ENCODE measurements at regions of chr16 and their contacts with region 1.

Region 1: GRCh38 chr16:84504420-84505248 is at the start of gene MEAK7:
- DNase-seq: peak; percentile 93 to 99 (median 96)
- ATAC-seq: peak; percentile 99
- H3K4me3 ChIP-seq: peak within 1 kb of the TSS; percentile 97
- H3K4me3 Mint-ChIP-seq: peak within 1 kb of the TSS; percentile 79 to 94 (median 89)
- H3K27ac ChIP-seq: peak within 1 kb of the TSS; percentile 80
- H3K27ac Mint-ChIP-seq: peak within 1 kb of the TSS; percentile 52 to 88 (median 81)
- H3K4me1 ChIP-seq: peaks cover 23 to 49% of the 10 kb centered on the region in 2 donors
- H3K4me1 Mint-ChIP-seq: peaks cover 31 to 59% (median 55%) of the 10 kb centered on the region in 7 donors
- H3K27me3 ChIP-seq: no peaks in the 10 kb centered on the region
- H3K27me3 Mint-ChIP-seq: no peaks in the 10 kb centered on the region
- total RNA-seq, gene MEAK7: 6.3 to 56.1 (median 9.3) TPM

Region 2: DNA sequence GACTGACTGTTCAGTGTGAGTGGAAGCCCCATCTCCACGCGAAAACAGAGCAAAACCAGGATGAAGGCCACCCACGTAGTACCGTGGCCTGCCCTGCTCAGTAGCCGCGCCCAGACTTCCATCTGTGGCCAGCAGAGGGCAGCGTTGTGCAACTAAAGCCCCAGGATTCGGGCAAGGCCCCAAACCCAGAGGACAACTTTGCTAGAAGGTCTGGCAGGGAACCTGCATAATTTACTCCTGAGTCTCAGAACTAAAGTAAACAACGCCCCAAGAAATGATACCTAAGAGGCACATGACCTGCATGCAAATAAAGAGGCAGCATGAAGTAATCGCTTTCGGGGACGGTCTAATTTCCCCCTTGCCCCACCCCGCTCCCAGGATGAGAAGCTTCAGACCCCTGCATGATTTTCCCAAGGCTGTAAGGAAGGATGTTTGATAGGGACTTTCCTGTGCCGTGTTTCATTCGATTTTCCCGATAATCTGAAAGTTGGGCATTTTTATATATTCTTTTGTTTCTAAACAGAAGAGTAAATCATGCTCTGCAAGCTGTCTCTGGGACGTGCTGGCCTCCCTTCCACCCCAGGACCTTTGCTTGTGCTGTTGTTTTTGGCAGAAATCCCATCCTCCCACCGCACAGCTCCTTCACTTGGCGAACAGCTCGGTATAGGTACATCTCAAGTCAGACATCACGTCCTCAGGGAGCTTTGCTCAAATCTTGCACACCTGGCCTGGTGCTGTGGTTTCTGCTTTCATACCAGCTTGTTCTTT is 678.3 kb before region 1 on chr16:
- CTCF ChIA-PET with region 1: no interaction called
- POLR2A ChIA-PET with region 1: no interaction called
- intact Hi-C with region 1: loop called in 1 of 2 experiments (anchors 1 kb)
- DNase-seq: peak; percentile 42 to 82 (median 69)
- ATAC-seq: peak; percentile 96
- H3K4me3 ChIP-seq: no peak overlapping the region
- H3K4me3 Mint-ChIP-seq: peak overlapping the region in 1 of 10 donors; percentile 46
- H3K27ac ChIP-seq: no peak overlapping the region
- H3K27ac Mint-ChIP-seq: peak overlapping the region in 3 of 9 donors; percentile 10 to 72 (median 69)
- H3K4me1 ChIP-seq: no peaks in the 10 kb centered on the region
- H3K4me1 Mint-ChIP-seq: peaks cover 0 to 6% (median 5%) of the 10 kb centered on the region in 7 donors
- H3K27me3 ChIP-seq: no peaks in the 10 kb centered on the region
- H3K27me3 Mint-ChIP-seq: peaks cover 0 to 5% (median 0%) of the 10 kb centered on the region in 5 donors

Region 3: GRCh38 chr16:84116720-84117493 is 387.7 kb before region 1 on chr16 and contains the start of gene MBTPS1:
- CTCF ChIA-PET with region 1: no interaction called
- POLR2A ChIA-PET with region 1: no interaction called
- intact Hi-C with region 1: loop called in 1 of 2 experiments (anchors 10 kb)
- DNase-seq: peak; percentile 94 to 99 (median 97)
- ATAC-seq: peak; percentile 92
- H3K4me3 ChIP-seq: peak within 1 kb of the TSS; percentile 99
- H3K4me3 Mint-ChIP-seq: peak within 1 kb of the TSS; percentile 90 to 96 (median 94)
- H3K27ac ChIP-seq: peak within 1 kb of the TSS; percentile 86
- H3K27ac Mint-ChIP-seq: peak within 1 kb of the TSS; percentile 93 to 98 (median 96)
- H3K4me1 ChIP-seq: peaks cover 14 to 18% of the 10 kb centered on the region in 2 donors
- H3K4me1 Mint-ChIP-seq: peaks cover 6 to 36% (median 23%) of the 10 kb centered on the region in 7 donors
- H3K27me3 ChIP-seq: no peaks in the 10 kb centered on the region
- H3K27me3 Mint-ChIP-seq: no peaks in the 10 kb centered on the region
- total RNA-seq, gene MBTPS1: 65.3 to 157 (median 138) TPM

Region 4: DNA sequence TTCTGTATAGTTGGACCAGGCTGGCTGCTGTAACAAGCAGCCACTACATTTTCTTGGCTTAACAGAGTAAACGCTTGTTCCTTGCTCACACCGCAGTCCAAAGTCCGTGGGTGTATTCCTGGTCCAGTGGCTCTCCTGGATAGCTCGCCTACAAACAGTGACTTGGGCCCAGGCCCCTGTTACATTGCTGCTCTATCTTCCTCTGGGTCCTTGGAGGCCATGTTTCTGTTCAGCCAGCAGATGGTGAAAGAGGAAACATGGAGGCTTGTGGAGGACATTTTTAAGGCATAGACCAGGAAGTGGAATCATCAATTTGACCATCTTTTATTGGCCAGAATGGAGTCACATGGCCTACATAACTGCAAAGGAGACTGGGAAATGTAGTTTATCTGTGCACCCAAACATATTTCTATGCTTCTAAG is 81.2 kb before region 1 on chr16:
- CTCF ChIA-PET with region 1: no interaction called
- POLR2A ChIA-PET with region 1: no interaction called
- intact Hi-C with region 1: no loop called
- DNase-seq: no peak
- ATAC-seq: no peak
- H3K4me3 ChIP-seq: no peak overlapping the region
- H3K4me3 Mint-ChIP-seq: no peak overlapping the region
- H3K27ac ChIP-seq: no peak overlapping the region
- H3K27ac Mint-ChIP-seq: no peak overlapping the region
- H3K4me1 ChIP-seq: no peaks in the 10 kb centered on the region
- H3K4me1 Mint-ChIP-seq: peaks cover 0 to 3% (median 0%) of the 10 kb centered on the region in 7 donors
- H3K27me3 ChIP-seq: no peaks in the 10 kb centered on the region
- H3K27me3 Mint-ChIP-seq: peaks cover 0 to 21% (median 5%) of the 10 kb centered on the region in 5 donors

Region 5: GRCh38 chr16:84475618-84476340 is 28.9 kb before region 1 on chr16:
- CTCF ChIA-PET with region 1: no interaction called
- POLR2A ChIA-PET with region 1: no interaction called
- intact Hi-C with region 1: no loop called
- DNase-seq: peak in 3 of 9 donors; percentile 8 to 29 (median 20)
- ATAC-seq: no peak
- H3K4me3 ChIP-seq: no peak overlapping the region
- H3K4me3 Mint-ChIP-seq: peak overlapping the region in 1 of 10 donors; percentile 4
- H3K27ac ChIP-seq: no peak overlapping the region
- H3K27ac Mint-ChIP-seq: peak overlapping the region in 6 of 9 donors; percentile 0 to 79 (median 28)
- H3K4me1 ChIP-seq: no peaks in the 10 kb centered on the region
- H3K4me1 Mint-ChIP-seq: peaks cover 5 to 25% (median 5%) of the 10 kb centered on the region in 7 donors
- H3K27me3 ChIP-seq: no peaks in the 10 kb centered on the region
- H3K27me3 Mint-ChIP-seq: no peaks in the 10 kb centered on the region

Region 6: DNA sequence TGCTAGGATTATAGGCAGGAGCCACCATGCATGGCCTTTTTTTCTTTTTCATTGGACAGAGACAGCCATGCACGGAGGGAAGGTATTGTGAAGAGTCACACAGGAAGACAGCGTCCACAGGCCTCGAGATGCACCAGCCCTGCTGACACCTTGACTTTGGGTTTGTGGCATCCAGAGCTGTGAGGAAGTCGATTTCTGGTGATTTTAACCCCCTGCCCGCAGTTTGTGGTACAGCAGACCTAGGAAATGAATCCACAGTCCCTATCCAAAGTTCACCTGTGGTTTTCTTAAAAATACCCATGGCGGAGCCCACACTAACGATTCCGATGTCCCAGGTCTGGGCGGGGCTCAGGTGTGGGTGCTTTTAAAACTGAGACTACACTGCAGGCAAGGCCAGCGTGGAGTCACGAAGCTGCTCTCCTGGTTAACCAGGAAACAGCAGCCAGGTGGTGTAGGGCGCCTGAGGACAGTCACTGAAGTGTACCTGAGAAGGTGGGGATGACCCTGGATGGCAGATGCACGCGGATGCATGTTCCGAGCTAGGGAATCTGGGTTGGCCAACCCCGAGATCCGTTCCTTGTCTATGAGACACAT is 14.2 kb after region 1 on chr16:
- CTCF ChIA-PET with region 1: interaction called, 18 read pairs
- POLR2A ChIA-PET with region 1: interaction called, 22 read pairs
- intact Hi-C with region 1: loop called (anchors 1 kb)
- DNase-seq: peak in 8 of 9 donors; percentile 55 to 73 (median 67)
- ATAC-seq: peak; percentile 64
- H3K4me3 ChIP-seq: peak overlapping the region; percentile 1
- H3K4me3 Mint-ChIP-seq: peak overlapping the region; percentile 32 to 72 (median 54)
- H3K27ac ChIP-seq: peak overlapping the region; percentile 56
- H3K27ac Mint-ChIP-seq: peak overlapping the region; percentile 72 to 91 (median 85)
- H3K4me1 ChIP-seq: peaks cover 48 to 66% of the 10 kb centered on the region in 2 donors
- H3K4me1 Mint-ChIP-seq: peaks cover 38 to 74% (median 62%) of the 10 kb centered on the region in 7 donors
- H3K27me3 ChIP-seq: no peaks in the 10 kb centered on the region
- H3K27me3 Mint-ChIP-seq: no peaks in the 10 kb centered on the region

Region 7: DNA sequence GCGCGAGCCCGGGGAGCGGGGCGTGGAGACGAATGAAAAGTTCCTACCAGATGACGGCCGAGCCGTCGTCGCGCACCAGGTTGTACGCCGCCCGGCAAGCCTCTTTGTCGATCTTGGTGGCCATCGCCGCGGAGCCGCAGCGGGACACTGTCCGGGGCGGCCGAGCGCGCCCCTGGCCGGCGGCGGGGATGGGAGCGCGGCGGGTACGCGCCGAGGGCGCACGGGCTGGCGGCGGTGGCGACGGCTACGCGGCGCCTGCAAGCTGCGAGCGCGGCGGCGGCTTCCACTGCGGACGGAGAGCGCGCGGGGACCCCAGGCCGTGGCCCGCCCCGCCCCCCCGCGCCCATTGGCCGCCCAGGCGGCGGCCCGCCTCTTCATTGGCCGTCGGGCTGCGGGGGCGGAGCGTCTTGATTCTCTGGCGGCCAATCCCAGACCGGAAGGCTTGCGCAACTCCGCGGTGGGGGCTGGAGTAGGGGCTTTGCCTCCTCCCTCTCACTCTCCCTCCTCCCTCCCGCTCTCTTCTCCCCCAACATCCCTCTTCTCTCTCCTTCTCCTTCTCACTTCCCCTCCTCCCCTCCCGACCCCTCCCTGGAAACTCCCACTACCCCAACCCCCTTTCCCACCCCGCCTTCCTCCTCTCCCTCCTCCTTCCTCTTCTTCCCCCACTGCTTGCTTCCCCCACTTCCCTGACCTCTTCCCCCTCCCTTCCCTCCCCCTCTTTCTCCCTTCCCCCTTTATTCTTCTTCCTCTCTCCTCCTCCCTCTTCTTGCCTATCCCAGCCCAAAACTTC is 113.4 kb after region 1 on chr16 and contains the start of gene COTL1:
- CTCF ChIA-PET with region 1: interaction called, 129 read pairs
- POLR2A ChIA-PET with region 1: interaction called, 38 read pairs
- intact Hi-C with region 1: no loop called
- DNase-seq: peak; percentile 86 to 96 (median 90)
- ATAC-seq: peak; percentile 94
- H3K4me3 ChIP-seq: peak within 1 kb of the TSS; percentile 70
- H3K4me3 Mint-ChIP-seq: peak within 1 kb of the TSS; percentile 95 to 99 (median 97)
- H3K27ac ChIP-seq: peak within 1 kb of the TSS; percentile 68
- H3K27ac Mint-ChIP-seq: peak within 1 kb of the TSS; percentile 82 to 95 (median 91)
- H3K4me1 ChIP-seq: peaks cover 32 to 39% of the 10 kb centered on the region in 2 donors
- H3K4me1 Mint-ChIP-seq: peaks cover 33 to 64% (median 53%) of the 10 kb centered on the region in 7 donors
- H3K27me3 ChIP-seq: no peaks in the 10 kb centered on the region
- H3K27me3 Mint-ChIP-seq: peaks cover 0 to 14% (median 0%) of the 10 kb centered on the region in 5 donors
- total RNA-seq, gene COTL1: 84.2 to 704 (median 172) TPM

Region 8: GRCh38 chr16:84738255-84739038 is 233.8 kb after region 1 on chr16:
- CTCF ChIA-PET with region 1: interaction called, 18 read pairs
- POLR2A ChIA-PET with region 1: no interaction called
- intact Hi-C with region 1: loop called in 1 of 2 experiments (anchors 1 kb)
- DNase-seq: peak; percentile 49 to 77 (median 72)
- ATAC-seq: peak; percentile 85
- H3K4me3 ChIP-seq: no peak overlapping the region
- H3K4me3 Mint-ChIP-seq: peak overlapping the region in 6 of 10 donors; percentile 6 to 76 (median 38)
- H3K27ac ChIP-seq: no peak overlapping the region
- H3K27ac Mint-ChIP-seq: peak overlapping the region in 8 of 9 donors; percentile 21 to 81 (median 64)
- H3K4me1 ChIP-seq: peaks cover 0 to 23% of the 10 kb centered on the region in 2 donors
- H3K4me1 Mint-ChIP-seq: peaks cover 38 to 61% (median 55%) of the 10 kb centered on the region in 7 donors
- H3K27me3 ChIP-seq: no peaks in the 10 kb centered on the region
- H3K27me3 Mint-ChIP-seq: no peaks in the 10 kb centered on the region

Region 9: DNA sequence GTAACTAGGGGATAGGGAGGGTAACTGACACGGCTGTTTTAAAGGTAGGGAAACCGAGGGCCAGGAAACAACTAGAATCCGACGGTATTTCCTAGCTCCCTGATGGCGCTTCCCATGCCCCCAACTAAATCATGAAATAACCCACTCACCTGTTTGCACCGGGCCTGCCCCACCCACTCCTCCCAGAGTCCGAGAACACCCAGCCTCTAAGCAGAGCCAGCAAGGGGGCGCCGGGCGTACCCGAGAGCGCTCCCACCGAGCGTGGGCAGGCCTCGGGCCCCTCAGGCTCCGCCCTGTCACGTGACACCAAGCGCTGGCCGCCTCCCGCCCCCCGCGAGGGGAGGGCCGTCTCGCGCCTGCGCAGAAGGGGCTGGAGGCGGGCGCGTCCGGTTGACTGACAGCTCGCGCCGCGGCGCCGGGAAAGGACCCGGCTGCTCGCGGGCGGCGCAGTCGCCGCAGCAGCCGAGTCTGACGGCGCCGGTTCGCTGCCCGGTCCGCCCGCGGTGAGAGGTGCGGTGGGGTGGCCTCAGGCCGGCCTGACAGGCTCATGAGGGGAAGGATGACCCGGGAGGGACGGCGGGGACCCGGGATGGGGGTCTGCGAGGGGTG is 522.8 kb after region 1 on chr16 and contains the start of gene KIAA0513:
- CTCF ChIA-PET with region 1: no interaction called
- POLR2A ChIA-PET with region 1: no interaction called
- intact Hi-C with region 1: loop called in 1 of 2 experiments (anchors 5 kb)
- DNase-seq: peak; percentile 93 to 100 (median 97)
- ATAC-seq: peak; percentile 87
- H3K4me3 ChIP-seq: peak within 1 kb of the TSS; percentile 85
- H3K4me3 Mint-ChIP-seq: peak within 1 kb of the TSS; percentile 88 to 94 (median 92)
- H3K27ac ChIP-seq: peak within 1 kb of the TSS; percentile 93
- H3K27ac Mint-ChIP-seq: peak within 1 kb of the TSS; percentile 73 to 96 (median 94)
- H3K4me1 ChIP-seq: peaks cover 22 to 23% of the 10 kb centered on the region in 2 donors
- H3K4me1 Mint-ChIP-seq: peaks cover 25 to 40% (median 33%) of the 10 kb centered on the region in 7 donors
- H3K27me3 ChIP-seq: no peaks in the 10 kb centered on the region
- H3K27me3 Mint-ChIP-seq: no peaks in the 10 kb centered on the region
- total RNA-seq, gene KIAA0513: 9.5 to 28.9 (median 15.1) TPM

Measured in naive thymus-derived CD4-positive, alpha-beta T cell (primary cell).